ENCODE measurements at regions of chr3 and their contacts with region 1.

Region 1: DNA sequence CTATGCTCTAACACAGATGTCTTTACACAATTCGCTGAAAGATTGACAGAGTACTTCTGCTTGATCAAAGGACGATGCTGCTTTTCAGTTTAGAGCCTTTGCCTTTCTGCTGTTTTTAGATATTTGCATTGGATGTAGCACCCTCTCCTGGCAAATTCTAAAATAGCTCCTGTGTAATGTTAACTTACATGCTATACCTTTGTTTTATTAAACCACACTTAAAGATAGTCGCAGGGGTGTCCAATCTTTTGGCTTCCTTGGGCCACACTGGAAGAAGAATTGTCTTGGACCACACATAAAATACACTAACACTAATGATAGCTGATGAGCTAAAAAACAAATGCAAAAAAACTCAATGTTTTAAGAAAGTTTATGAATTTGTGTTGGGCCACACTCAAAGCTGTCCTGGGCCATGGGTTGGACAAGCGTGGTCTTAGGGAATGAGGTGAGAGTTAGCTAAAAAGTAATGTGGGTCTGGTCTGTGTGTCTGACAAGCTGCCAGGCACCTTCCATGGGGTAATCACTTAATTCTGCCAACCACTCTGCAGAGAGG is 62.9 kb downstream of the ATG7 start:
- DNase-seq: peak; percentile 54
- ATAC-seq: peak; percentile 72
- H3K4me3 Mint-ChIP-seq: no peak overlapping the region
- H3K27ac Mint-ChIP-seq: no peak overlapping the region
- H3K4me1 Mint-ChIP-seq: no peaks in the 10 kb centered on the region
- H3K27me3 Mint-ChIP-seq: no peaks in the 10 kb centered on the region

Region 2: DNA sequence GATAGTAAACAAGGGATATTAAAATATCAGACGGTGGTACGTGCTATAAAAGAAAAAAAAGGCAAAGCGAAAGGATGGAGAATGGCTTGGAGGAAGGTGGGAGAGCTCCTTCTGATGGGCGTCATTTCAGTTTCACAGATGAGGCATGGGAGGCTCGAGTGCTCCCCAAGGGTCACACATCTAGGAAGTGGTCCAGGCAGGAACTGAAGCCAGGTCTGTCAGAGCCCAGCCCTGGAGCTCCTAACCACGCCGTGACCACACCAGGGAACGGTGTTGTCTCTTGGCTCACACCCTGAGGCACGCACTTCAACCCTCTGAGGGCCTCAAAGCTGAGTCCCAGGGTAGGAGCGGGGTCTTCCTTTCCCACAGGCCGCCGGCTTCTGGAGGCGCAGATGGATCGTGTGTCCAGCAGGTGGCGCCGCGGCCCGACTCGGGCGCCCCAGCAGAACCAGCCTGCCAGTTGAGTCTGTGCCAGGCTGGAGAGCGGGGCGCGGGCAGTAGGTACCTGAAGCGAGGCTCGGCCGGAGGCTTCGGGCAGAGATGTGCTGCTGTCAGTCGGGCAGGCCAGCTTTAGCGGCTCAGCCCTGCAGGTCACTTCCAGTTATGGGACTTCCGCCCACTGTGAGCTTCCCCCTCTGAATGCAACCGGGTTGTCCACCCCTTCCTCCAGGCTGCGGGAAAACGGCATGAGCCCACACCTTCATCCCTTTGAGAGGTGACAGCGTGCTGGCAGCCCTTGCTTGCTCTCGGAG is 274.5 kb before region 1 on chr3:
- CTCF ChIA-PET with region 1: interaction called, 25 read pairs
- POLR2A ChIA-PET with region 1: no interaction called
- DNase-seq: peak; percentile 56
- ATAC-seq: peak; percentile 78
- H3K4me3 Mint-ChIP-seq: no peak overlapping the region
- H3K27ac Mint-ChIP-seq: no peak overlapping the region
- H3K4me1 Mint-ChIP-seq: no peaks in the 10 kb centered on the region
- H3K27me3 Mint-ChIP-seq: peaks cover 5% of the 10 kb centered on the region

Region 3: DNA sequence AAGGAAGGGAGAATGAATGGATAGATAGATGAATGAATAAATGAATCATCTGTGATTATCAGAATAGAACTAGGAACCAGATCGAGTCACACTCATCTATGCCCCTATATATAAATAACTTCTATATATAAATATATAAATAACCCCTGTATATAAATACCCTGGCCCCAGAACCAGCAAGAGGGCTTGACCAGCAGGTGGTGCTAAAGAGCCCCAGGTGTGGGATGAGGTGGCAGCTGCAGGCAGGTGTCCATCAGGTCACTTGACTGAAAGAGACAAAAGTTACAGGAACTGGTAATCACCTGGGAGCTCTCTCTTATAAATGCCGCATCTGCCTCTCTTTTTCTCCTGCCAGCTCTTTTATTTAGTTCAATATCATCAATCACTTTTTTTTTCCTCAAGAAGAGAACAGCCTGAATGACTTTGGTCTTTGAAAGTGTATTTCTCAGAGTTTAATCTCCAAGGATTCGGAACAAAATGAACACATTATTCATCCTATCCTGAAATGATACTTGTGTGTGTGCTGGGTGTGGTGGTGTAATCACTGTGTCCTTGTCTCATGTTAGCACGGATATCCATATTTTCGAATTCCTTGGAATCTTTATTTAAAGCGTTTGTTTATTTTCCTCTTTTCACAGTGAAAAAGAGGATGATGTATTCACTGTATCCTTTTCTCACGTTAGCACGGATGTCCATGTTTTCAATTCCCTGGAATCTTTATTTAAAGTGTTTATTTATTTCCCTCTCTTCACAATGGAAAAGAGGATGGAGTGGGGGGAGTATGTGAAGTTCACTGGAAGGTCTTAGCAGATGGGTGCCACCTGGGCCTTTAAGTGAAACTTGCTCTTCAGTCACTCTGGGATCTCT is 98.3 kb before region 1 on chr3:
- CTCF ChIA-PET with region 1: interaction called, 80 read pairs
- POLR2A ChIA-PET with region 1: no interaction called
- DNase-seq: peak; percentile 84
- ATAC-seq: peak; percentile 72
- H3K4me3 Mint-ChIP-seq: no peak overlapping the region
- H3K27ac Mint-ChIP-seq: no peak overlapping the region
- H3K4me1 Mint-ChIP-seq: peaks cover 21% of the 10 kb centered on the region
- H3K27me3 Mint-ChIP-seq: peaks cover 10% of the 10 kb centered on the region

Region 4: GRCh38 chr3:11260460-11260859 is 74.7 kb before region 1 on chr3:
- CTCF ChIA-PET with region 1: interaction called, 10 read pairs
- POLR2A ChIA-PET with region 1: no interaction called
- DNase-seq: no peak
- ATAC-seq: no peak
- H3K4me3 Mint-ChIP-seq: no peak overlapping the region
- H3K27ac Mint-ChIP-seq: no peak overlapping the region
- H3K4me1 Mint-ChIP-seq: no peaks in the 10 kb centered on the region
- H3K27me3 Mint-ChIP-seq: peaks cover 4% of the 10 kb centered on the region

Region 5: DNA sequence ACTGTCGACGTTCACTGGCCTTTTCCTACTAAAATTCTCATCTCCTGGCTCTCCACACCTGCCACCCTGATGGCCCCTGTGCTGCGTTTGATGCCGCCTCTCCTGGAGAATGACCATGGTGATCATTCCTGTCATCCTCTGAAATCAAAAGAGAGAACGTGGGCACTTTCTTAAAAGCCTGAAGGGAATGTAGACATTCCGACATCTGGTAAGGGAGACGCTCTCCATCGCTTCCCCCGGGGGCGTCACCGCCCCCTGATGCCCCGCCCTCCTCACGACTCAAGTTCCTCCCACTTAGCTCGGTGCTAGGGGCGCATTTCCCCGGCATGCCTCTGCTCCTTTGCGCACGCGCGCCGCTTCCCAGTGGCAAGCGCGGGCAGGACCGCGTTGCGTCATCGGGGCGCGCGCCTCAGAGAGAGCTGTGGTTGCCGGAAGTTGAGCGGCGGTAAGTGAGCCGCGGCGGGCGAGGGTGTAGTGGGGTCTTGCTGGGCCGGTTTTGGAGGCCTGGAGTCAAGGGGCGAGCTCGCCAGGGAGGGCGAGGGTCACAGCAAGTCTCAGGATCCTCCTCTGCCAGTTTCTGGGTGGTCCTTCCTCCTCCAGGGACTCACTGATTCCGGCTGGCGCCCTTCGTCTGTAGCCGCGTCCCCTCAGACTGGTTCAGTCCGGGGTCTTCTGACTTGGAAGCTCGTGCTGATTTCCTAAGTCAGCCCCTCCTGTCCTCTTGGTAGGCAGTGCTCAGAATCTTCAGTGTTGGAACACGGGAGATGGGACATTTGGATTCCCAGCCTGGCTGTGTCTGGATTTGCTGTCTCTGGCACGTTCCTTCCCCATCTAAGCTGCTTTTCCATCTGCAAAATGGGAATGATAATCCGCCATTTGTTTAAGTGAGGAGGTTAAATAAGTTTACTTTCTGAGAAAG is 62.9 kb before region 1 on chr3 and contains the start of gene ATG7:
- CTCF ChIA-PET with region 1: interaction called, 14 read pairs
- POLR2A ChIA-PET with region 1: no interaction called
- DNase-seq: peak; percentile 97
- ATAC-seq: peak; percentile 98
- H3K4me3 Mint-ChIP-seq: peak within 1 kb of the TSS; percentile 91
- H3K27ac Mint-ChIP-seq: peak within 1 kb of the TSS; percentile 96
- H3K4me1 Mint-ChIP-seq: peaks cover 36% of the 10 kb centered on the region
- H3K27me3 Mint-ChIP-seq: no peaks in the 10 kb centered on the region
- total RNA-seq, gene ATG7: 36.8 to 40.0 TPM

Region 6: DNA sequence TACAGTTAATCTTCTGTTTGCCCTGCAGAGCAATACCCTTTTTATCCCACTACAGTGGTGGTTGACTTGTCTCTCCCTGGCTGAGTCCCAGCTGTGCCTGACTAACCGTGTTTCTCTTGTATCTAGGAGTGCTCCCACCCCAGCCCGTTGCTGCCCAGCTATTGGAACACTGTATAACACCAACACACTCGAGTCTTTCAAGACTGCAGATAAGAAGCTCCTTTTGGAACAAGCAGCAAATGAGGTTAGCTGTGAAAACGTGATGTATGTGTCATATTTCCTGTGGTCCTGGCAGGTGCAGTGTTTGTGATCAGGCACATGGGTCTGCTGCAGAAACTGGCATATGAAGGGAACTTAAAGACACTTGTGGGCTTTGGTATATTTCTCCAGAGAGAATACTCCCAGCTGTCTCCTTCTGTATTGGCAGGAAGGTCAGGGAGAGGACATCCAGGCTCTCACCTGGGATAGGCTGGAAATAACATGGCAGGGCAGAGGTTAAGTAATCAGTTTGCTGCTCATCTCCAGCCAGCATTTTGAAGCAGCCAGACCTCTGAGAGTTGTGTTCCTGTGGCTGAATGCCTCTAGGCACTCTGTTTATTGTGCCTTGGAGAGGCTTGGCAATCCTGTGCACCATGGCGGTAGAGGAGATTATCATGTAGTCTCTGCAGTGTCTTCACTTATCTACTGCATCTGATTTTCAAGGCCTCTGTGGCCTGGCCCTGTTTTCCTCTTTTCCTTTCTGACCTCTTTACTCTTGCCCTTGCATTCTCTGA is 28.1 kb before region 1 on chr3:
- CTCF ChIA-PET with region 1: interaction called, 18 read pairs
- POLR2A ChIA-PET with region 1: no interaction called
- DNase-seq: peak; percentile 59
- ATAC-seq: peak; percentile 89
- H3K4me3 Mint-ChIP-seq: no peak overlapping the region
- H3K27ac Mint-ChIP-seq: peak overlapping the region; percentile 83
- H3K4me1 Mint-ChIP-seq: peaks cover 29% of the 10 kb centered on the region
- H3K27me3 Mint-ChIP-seq: no peaks in the 10 kb centered on the region

Region 7: DNA sequence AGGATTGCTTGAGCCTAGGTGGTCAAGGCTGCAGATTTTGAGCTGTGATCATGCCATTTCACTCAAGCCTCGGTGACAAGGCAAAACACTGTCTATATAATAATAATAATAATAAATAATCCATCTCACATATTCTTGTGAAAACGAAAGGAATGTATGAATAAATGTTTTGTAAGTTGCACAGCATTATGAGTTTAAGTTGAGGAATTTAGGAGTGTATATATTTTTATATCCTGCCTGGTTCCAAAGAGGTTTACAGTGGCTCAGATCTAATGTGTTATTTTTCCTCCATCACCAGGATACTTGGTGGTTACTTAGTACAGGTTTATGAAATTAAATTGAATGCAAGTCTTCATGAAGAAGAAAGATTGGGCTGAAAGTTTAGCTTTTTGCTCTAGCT is 14.3 kb after region 1 on chr3:
- CTCF ChIA-PET with region 1: interaction called, 11 read pairs
- POLR2A ChIA-PET with region 1: no interaction called
- DNase-seq: no peak
- ATAC-seq: no peak
- H3K4me3 Mint-ChIP-seq: no peak overlapping the region
- H3K27ac Mint-ChIP-seq: no peak overlapping the region
- H3K4me1 Mint-ChIP-seq: no peaks in the 10 kb centered on the region
- H3K27me3 Mint-ChIP-seq: no peaks in the 10 kb centered on the region